WTC11 (cell line): ENCODE measurements at regions of chr15 and their contacts with region 1.

Region 1: GRCh38 chr15:75884041-75884440 is 19.6 kb upstream of the FBXO22 start:
- DNase-seq: no peak
- ATAC-seq: no peak
- H3K4me3 Mint-ChIP-seq: no peak overlapping the region
- H3K27ac Mint-ChIP-seq: no peak overlapping the region
- H3K4me1 Mint-ChIP-seq: peaks cover 10% of the 10 kb centered on the region
- H3K27me3 Mint-ChIP-seq: no peaks in the 10 kb centered on the region
- CTCF ChIP-seq: no peak

Region 2: DNA sequence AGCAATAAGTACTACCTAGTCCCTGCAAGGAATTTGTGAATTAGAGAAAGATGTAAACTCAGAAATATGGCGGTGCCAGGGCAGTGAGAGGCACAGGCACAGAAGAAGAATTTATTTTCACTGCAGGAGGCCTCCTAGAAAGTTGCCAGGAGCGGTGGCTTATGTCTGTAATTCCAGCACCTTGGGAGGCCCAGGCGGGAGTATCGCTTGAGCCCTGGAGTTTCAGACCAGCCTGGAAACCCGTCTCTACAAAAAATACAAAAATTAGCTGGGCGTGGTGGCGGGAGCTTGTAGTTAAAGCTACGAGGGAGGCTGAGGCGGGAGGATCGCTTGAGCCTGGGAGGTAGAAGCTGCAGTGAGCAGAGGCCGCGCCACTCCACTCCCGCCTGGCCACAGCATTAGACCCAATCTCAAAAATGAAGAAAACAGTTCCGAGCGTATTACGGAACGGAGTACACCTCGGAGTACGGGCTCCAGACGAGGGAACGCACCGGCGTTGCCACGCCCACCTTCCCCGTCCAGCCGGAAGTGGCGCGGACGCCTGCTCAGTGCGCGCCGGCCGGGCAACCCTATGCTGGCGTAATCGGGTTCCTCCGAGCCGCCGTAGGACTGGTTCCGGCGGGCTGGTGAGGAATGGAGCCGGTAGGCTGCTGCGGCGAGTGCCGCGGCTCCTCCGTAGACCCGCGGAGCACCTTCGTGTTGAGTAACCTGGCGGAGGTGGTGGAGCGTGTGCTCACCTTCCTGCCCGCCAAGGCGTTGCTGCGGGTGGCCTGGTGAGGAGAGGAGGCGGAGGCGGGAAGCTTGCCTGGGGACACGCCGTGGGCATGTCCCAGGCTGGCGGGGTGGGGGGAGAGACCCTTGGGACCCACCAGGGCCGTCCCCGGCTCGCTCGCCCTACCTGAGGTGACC is 19.5 kb after region 1 on chr15 and contains the start of gene FBXO22:
- CTCF ChIA-PET with region 1: interaction called, 11 read pairs
- POLR2A ChIA-PET with region 1: no interaction called
- DNase-seq: peak; percentile 96
- ATAC-seq: peak; percentile 90
- H3K4me3 Mint-ChIP-seq: peak within 1 kb of the TSS; percentile 99
- H3K27ac Mint-ChIP-seq: peak within 1 kb of the TSS; percentile 100
- H3K4me1 Mint-ChIP-seq: peaks cover 45% of the 10 kb centered on the region
- H3K27me3 Mint-ChIP-seq: no peaks in the 10 kb centered on the region
- CTCF ChIP-seq: no peak
- total RNA-seq, gene FBXO22: 90.3 to 95.7 TPM (median 90.9 TPM) in 3 replicates

Region 3: GRCh38 chr15:76139368-76140073 is 255.5 kb after region 1 on chr15:
- CTCF ChIA-PET with region 1: no interaction called
- POLR2A ChIA-PET with region 1: no interaction called
- DNase-seq: peak; percentile 90
- ATAC-seq: peak; percentile 94
- H3K4me3 Mint-ChIP-seq: peak overlapping the region; percentile 13; the same call in 1 of the 2 replicates
- H3K27ac Mint-ChIP-seq: no peak overlapping the region; the same call in 1 of the 2 replicates
- H3K4me1 Mint-ChIP-seq: peaks cover 24% of the 10 kb centered on the region
- H3K27me3 Mint-ChIP-seq: no peaks in the 10 kb centered on the region; the same call in 1 of the 2 replicates
- CTCF ChIP-seq: peak; percentile 93